ENCODE measurements at regions of chr1 and their contacts with region 1.

Region 1: GRCh38 chr1:171801487-171801891 is 20.0 kb downstream of the METTL13 start:
- DNase-seq: no peak
- H3K4me3 Mint-ChIP-seq: no peak overlapping the region
- H3K27ac Mint-ChIP-seq: no peak overlapping the region
- H3K4me1 Mint-ChIP-seq: peaks cover 3% of the 10 kb centered on the region
- H3K27me3 Mint-ChIP-seq: no peaks in the 10 kb centered on the region

Region 2: GRCh38 chr1:171501305-171502024 is 300.0 kb before region 1 on chr1:
- CTCF ChIA-PET with region 1: no interaction called
- intact Hi-C with region 1: no loop called
- DNase-seq: no peak
- H3K4me3 Mint-ChIP-seq: no peak overlapping the region
- H3K27ac Mint-ChIP-seq: peak overlapping the region; percentile 71
- H3K4me1 Mint-ChIP-seq: peaks cover 87% of the 10 kb centered on the region
- H3K27me3 Mint-ChIP-seq: no peaks in the 10 kb centered on the region

Region 3: GRCh38 chr1:171817511-171818265 is 16.2 kb after region 1 on chr1:
- CTCF ChIA-PET with region 1: interaction called, 14 read pairs
- intact Hi-C with region 1: no loop called
- DNase-seq: peak; percentile 67
- H3K4me3 Mint-ChIP-seq: no peak overlapping the region
- H3K27ac Mint-ChIP-seq: peak overlapping the region; percentile 31
- H3K4me1 Mint-ChIP-seq: peaks cover 11% of the 10 kb centered on the region
- H3K27me3 Mint-ChIP-seq: no peaks in the 10 kb centered on the region

Region 4: GRCh38 chr1:171841050-171841940 is 39.8 kb after region 1 on chr1 and contains the start of gene DNM3:
- CTCF ChIA-PET with region 1: interaction called, 21 read pairs
- intact Hi-C with region 1: no loop called
- DNase-seq: peak; percentile 66
- H3K4me3 Mint-ChIP-seq: peak within 1 kb of the TSS; percentile 79
- H3K27ac Mint-ChIP-seq: no peak within 1 kb of the TSS
- H3K4me1 Mint-ChIP-seq: peaks cover 14% of the 10 kb centered on the region
- H3K27me3 Mint-ChIP-seq: peaks cover 13% of the 10 kb centered on the region
- total RNA-seq, gene DNM3: 0.96 to 0.98 TPM

Region 5: GRCh38 chr1:171919891-171920887 is 118.7 kb after region 1 on chr1:
- CTCF ChIA-PET with region 1: no interaction called
- intact Hi-C with region 1: loop called (anchors 5 kb)
- DNase-seq: no peak
- H3K4me3 Mint-ChIP-seq: no peak overlapping the region
- H3K27ac Mint-ChIP-seq: no peak overlapping the region
- H3K4me1 Mint-ChIP-seq: peaks cover 4% of the 10 kb centered on the region
- H3K27me3 Mint-ChIP-seq: no peaks in the 10 kb centered on the region

Region 6: GRCh38 chr1:171984850-171985485 is 183.5 kb after region 1 on chr1:
- CTCF ChIA-PET with region 1: interaction called, 232 read pairs
- intact Hi-C with region 1: loop called (anchors 1 kb)
- DNase-seq: no peak
- H3K4me3 Mint-ChIP-seq: no peak overlapping the region
- H3K27ac Mint-ChIP-seq: no peak overlapping the region
- H3K4me1 Mint-ChIP-seq: no peaks in the 10 kb centered on the region
- H3K27me3 Mint-ChIP-seq: no peaks in the 10 kb centered on the region